ENCODE measurements at regions of chr3 and their contacts with region 1.

Region 1: GRCh38 chr3:160686955-160687535 is 10.1 kb downstream of the ARL14 start:
- DNase-seq: peak in 2 of 3 donors; percentile 20 to 27
- H3K4me3 ChIP-seq: no peak overlapping the region
- H3K27ac ChIP-seq: no peak overlapping the region
- H3K4me1 ChIP-seq: no peaks in the 10 kb centered on the region
- H3K27me3 ChIP-seq: no peaks in the 10 kb centered on the region

Region 2: GRCh38 chr3:160676547-160677303 is 10.3 kb before region 1 on chr3 and contains the start of gene ARL14:
- CTCF ChIA-PET with region 1: interaction called, 15 read pairs
- POLR2A ChIA-PET with region 1: no interaction called
- DNase-seq: no peak
- H3K4me3 ChIP-seq: no peak within 1 kb of the TSS
- H3K27ac ChIP-seq: no peak within 1 kb of the TSS
- H3K4me1 ChIP-seq: no peaks in the 10 kb centered on the region
- H3K27me3 ChIP-seq: no peaks in the 10 kb centered on the region

Measured in common myeloid progenitor, CD34-positive (primary cell).